Right lobe of liver (tissue), 6 donors: ENCODE measurements at regions of chrX and their contacts with region 1.

Region 1: DNA sequence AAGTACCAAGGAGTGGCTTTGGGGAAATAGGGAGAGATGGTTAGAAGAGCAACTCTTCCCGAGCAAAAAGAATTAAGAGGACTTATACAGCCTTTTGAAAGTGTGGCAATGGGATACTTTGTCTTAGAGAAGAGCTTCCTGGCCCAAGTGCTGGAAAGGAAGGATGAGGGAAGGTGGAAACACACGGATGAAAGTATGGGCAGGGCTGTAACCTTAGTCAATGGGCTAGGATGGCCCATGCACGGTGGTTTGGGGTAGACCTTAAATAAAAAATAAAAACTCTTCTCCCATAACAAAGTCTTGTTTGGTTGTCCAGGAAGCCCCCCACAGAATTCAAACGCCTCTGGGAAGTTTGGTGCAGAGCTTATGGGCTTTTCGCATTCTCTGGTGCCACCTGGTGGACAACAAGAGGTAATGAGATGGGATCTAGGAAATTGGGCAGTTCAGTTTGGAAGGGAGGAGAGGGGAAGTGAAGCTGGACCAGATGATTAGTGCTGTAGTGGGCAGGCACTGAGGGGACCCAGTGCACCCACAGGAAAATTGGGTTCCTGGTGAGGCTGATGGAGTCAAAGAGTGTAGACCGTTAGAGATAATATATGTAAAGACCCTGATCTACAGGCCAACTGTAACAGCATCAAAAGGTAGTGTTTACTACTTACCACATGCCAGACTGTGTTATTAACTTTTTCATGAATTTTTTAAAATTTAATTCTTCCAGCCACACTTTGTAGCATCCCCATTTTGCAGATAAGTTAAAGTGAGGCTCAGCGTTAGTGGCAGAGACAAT is 13.8 kb upstream of the ENOX2 start:
- DNase-seq: peak in 2 of 3 donors; percentile 25 to 45
- ATAC-seq: peak; percentile 78 to 90 (median 85)
- H3K4me3 ChIP-seq: no peak overlapping the region
- H3K27ac ChIP-seq: no peak overlapping the region
- H3K4me1 ChIP-seq: no peaks in the 10 kb centered on the region
- H3K27me3 ChIP-seq: no peaks in the 10 kb centered on the region
- CTCF ChIP-seq: peak; percentile 74 to 87 (median 82)
- POLR2A ChIP-seq: no peak

Region 2: DNA sequence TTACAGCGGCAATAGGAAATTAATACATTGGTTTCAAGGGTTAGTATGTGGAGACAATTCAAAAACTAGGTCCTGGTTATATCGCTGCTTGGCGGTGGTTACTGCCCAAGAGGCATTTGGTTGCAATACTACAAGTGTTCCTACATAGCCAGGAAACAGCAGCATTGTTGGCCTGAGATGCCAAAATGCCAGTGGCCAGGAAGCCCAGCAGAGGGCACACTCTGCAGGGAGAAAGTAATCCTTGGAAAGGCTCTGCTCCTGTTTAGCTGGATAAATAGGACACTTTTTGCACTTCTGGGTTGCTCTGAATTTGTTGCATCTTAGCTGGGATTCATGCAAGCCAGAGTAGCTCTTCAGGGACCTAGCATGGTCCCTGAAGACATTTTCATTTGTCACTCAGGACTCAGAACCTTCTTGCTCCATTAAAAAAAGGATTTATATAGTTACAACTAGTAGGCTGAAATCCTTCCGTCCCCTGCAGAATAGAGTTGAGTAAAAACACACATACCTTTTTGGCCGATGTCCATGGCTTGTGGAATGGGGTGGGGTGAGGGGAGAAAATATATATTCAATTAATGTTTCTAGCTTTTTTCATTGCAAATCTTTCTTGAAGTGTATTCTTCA is 523.3 kb before region 1 on chrX:
- intact Hi-C with region 1: loop called in 1 of 2 experiments (anchors 10 kb)
- DNase-seq: peak in 2 of 3 donors; percentile 45 to 48
- ATAC-seq: peak; percentile 83 to 95 (median 94)
- H3K4me3 ChIP-seq: no peak overlapping the region
- H3K27ac ChIP-seq: no peak overlapping the region
- H3K4me1 ChIP-seq: no peaks in the 10 kb centered on the region
- H3K27me3 ChIP-seq: peaks cover 0 to 5% of the 10 kb centered on the region in 2 donors
- CTCF ChIP-seq: peak; percentile 60 to 89 (median 73)
- POLR2A ChIP-seq: no peak

Region 3: GRCh38 chrX:130539721-130540321 is 377.0 kb before region 1 on chrX:
- intact Hi-C with region 1: loop called (anchors 10 kb)
- DNase-seq: peak in 2 of 3 donors; percentile 46 to 51
- ATAC-seq: peak; percentile 74 to 91 (median 76)
- H3K4me3 ChIP-seq: no peak overlapping the region
- H3K27ac ChIP-seq: no peak overlapping the region
- H3K4me1 ChIP-seq: no peaks in the 10 kb centered on the region
- H3K27me3 ChIP-seq: no peaks in the 10 kb centered on the region
- CTCF ChIP-seq: peak; percentile 55 to 80 (median 76)
- POLR2A ChIP-seq: no peak

Region 4: GRCh38 chrX:131874300-131874699 is 957.5 kb after region 1 on chrX:
- intact Hi-C with region 1: no loop called
- DNase-seq: no peak
- ATAC-seq: no peak
- H3K4me3 ChIP-seq: no peak overlapping the region
- H3K27ac ChIP-seq: no peak overlapping the region
- H3K4me1 ChIP-seq: no peaks in the 10 kb centered on the region
- H3K27me3 ChIP-seq: no peaks in the 10 kb centered on the region
- CTCF ChIP-seq: no peak
- POLR2A ChIP-seq: no peak